ENCODE measurements at regions of chr14 and their contacts with region 1.

Region 1: GRCh38 chr14:72420725-72421474 is 473.0 kb downstream of the DPF3 start:
- DNase-seq: peak; percentile 69 to 99
- H3K4me3 ChIP-seq: no peak overlapping the region
- H3K27ac ChIP-seq: no peak overlapping the region
- H3K4me1 ChIP-seq: peaks cover 0 to 4% (median 0%) of the 10 kb centered on the region in 4 experiments; a peak in 1 of 7 replicates
- H3K27me3 ChIP-seq: no peaks in the 10 kb centered on the region
- CTCF ChIP-seq: peak; percentile 85 to 95 (median 88)
- EP300 ChIP-seq: no peak
- POLR2A ChIP-seq: no peak
- RAD21 ChIP-seq: peak; percentile 96 to 98

Region 2: GRCh38 chr14:72404998-72405397 is 15.9 kb before region 1 on chr14:
- CTCF ChIA-PET with region 1: interaction called, 13 read pairs
- POLR2A ChIA-PET with region 1: interaction called, 3 read pairs
- DNase-seq: no peak
- H3K4me3 ChIP-seq: no peak overlapping the region
- H3K27ac ChIP-seq: no peak overlapping the region
- H3K4me1 ChIP-seq: peaks cover 0 to 4% (median 0%) of the 10 kb centered on the region in 4 experiments; a peak in 1 of 7 replicates
- H3K27me3 ChIP-seq: no peaks in the 10 kb centered on the region
- CTCF ChIP-seq: peak in 1 of 3 experiments; percentile 36; a peak in 1 of 4 replicates
- EP300 ChIP-seq: no peak
- POLR2A ChIP-seq: no peak
- RAD21 ChIP-seq: no peak

Measured in H1 (cell line).